OCI-LY7 (cell line): ENCODE measurements at regions of chr17 and their contacts with region 1.

Region 1: GRCh38 chr17:39777534-39778365 is 40.0 kb downstream of the GRB7 start:
- DNase-seq: peak; percentile 63
- H3K4me3 ChIP-seq: peak overlapping the region; percentile 74
- H3K27ac ChIP-seq: peak overlapping the region; percentile 94
- H3K4me1 ChIP-seq: peaks cover 91% of the 10 kb centered on the region
- CTCF ChIP-seq: 0 out of 2 replicates have a peak, but pooled peaks have one; percentile 3

Region 2: DNA sequence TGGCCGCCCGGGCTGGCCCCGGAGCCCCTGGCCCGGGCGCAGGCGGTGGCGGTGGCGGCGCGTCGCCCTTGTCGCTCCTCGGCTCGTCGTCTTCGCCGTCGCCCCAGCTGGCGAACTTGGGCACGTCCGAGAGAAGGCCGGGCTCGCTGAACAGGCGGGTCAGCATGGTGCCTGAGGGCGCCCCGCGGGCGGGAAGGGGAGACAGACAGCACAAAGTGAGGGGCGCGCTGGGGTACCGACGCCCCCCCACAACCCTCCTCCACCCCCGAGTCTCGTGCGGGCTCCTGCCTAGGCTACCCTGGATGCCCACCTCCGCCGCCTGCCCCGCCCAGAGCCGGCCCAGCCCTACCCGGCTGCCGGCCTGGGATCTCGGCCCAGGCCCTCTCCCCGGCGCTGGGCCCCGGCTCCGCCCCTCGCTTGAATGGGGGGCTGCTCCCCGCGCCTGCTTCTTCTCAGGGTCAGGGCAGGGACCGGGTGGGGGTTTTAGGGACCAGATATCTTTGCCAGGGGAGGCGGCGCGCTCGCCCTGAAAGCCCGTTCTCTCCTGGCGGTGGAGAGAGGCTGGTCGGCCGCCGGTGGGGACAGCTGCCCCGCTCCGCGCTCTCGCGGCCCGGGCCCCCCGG is 171.2 kb before region 1 on chr17:
- CTCF ChIA-PET with region 1: no interaction called
- POLR2A ChIA-PET with region 1: no interaction called
- intact Hi-C with region 1: no loop called
- DNase-seq: no peak
- H3K4me3 ChIP-seq: no peak overlapping the region
- H3K27ac ChIP-seq: no peak overlapping the region
- H3K4me1 ChIP-seq: peaks cover 14% of the 10 kb centered on the region
- CTCF ChIP-seq: no peak

Region 3: DNA sequence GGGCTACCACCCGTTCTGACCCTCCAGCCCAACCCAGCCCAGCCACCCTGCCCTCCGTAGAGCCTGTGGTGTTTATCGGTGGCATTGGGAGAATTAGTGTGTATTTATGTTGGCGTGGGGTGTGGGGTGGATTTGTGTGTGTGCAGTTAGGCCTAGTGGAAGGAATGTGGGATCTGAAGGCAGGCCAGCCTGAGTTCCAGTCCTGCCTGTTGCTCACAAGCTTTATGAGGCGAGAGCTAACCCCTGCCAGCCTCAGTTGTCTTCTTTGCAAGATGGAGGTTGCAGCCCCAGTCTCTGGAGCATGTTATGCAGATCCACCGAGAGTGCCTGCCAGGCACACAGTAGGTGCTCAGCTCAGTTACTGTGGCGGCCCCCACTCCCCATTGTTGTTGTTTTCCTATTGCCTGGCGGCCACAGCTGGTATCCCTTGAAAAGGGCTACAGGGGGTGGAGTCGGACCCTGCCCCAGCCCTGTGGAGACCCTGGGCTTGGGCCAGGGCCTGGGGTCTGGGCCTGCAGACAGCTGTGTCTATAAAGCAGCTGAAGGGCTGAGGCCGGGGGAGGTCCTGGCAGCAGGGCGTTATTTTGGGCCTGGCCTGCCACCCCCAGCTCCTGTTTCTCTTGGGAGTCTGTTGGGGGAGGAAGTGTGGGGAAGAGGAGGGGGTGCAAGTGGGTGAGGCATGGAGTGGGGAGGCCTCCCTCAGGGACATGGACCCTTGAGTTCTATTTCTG is 72.8 kb before region 1 on chr17:
- CTCF ChIA-PET with region 1: no interaction called
- POLR2A ChIA-PET with region 1: no interaction called
- intact Hi-C with region 1: no loop called
- DNase-seq: no peak
- H3K4me3 ChIP-seq: no peak overlapping the region
- H3K27ac ChIP-seq: no peak overlapping the region
- H3K4me1 ChIP-seq: peaks cover 4% of the 10 kb centered on the region
- CTCF ChIP-seq: no peak

Region 4: DNA sequence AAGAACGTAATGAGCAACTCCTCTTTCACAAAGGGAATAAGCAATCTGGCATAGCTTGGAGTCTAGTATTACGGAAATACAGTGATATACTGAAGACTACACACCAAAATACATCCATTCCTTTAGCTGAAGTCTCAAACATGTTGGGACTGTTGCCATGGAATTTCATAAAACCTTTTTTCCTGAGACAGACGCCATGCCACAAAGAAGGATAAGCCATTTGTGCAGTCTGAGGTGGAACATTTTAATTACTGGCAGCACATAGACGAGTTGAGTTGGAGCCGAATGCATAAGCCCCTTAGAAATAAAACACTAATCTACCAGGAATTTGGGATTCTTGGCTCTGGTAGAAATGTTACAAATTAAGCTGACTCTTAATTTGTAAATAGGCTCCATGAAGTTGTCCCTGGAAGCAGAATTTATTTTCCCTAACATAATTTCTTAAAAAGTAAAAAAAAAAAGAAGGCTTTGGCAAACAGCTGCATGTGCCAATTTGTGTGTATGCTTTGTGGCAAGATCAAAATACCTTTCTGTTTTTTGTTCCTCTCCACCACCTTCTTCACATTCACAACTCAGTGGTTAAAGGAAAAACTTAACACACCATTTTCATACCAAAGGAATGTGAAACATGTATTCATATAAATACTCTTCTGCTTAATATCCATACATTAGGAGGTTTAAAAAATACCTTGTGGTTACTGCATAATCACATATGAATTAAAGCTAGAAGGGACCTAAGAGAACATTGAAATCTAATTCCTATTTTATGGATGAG is 14.5 kb before region 1 on chr17:
- CTCF ChIA-PET with region 1: no interaction called
- POLR2A ChIA-PET with region 1: interaction called, 24 read pairs
- intact Hi-C with region 1: no loop called
- DNase-seq: no peak
- H3K4me3 ChIP-seq: no peak overlapping the region
- H3K27ac ChIP-seq: no peak overlapping the region
- H3K4me1 ChIP-seq: peaks cover 52% of the 10 kb centered on the region
- CTCF ChIP-seq: no peak

Region 5: GRCh38 chr17:39794249-39794970 is 16.7 kb after region 1 on chr17:
- CTCF ChIA-PET with region 1: interaction called, 5 read pairs
- POLR2A ChIA-PET with region 1: interaction called, 70 read pairs
- intact Hi-C with region 1: loop called (anchors 1 kb)
- DNase-seq: peak; percentile 97
- H3K4me3 ChIP-seq: peak overlapping the region; percentile 54
- H3K27ac ChIP-seq: peak overlapping the region; percentile 99
- H3K4me1 ChIP-seq: peaks cover 96% of the 10 kb centered on the region
- CTCF ChIP-seq: no peak

Region 6: DNA sequence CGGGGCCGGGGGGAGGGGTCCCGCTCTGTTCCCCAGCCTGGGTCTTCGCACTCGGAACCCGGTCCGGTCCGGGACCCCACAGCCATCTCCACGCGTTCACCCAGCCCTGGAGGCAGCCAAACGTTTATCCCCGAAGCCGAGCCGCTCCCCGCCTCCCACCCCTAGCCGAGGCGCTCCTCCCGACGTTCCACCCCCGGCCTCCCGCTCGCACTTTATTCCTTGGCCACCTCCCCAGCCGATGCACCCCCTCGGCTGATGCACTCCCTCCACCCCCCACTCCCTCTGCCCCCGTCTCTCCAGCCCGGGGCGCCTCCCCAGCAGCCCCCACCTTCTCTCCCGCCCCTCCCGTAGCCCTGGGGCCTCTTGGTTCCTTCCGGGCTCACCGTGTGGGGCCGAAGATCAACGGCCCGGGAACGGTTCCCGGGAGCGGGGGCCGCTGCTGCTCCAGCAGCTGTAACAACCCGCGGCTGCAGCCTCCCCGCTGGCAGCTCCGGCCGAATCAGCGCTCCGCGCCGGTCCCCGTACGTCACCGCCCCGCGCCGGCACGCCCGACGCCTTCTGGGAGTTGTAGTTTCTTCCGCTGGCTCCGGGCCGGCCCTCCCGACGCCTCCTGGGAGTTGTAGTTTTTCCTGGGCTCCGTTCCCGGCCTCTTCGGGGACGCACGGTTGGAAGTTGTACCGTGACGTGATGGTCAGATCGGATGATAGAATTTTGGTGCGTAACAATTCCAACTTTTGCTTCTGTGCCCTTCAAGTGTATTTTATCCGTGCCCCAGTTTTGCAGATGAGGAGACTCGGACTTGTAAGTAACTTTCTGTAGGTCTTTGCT is 149.6 kb after region 1 on chr17 and contains the starts of genes LRRC3C and ORMDL3:
- CTCF ChIA-PET with region 1: no interaction called
- POLR2A ChIA-PET with region 1: interaction called, 4 read pairs
- intact Hi-C with region 1: loop called (anchors 5 kb)
- DNase-seq: peak; percentile 93
- H3K4me3 ChIP-seq: peak within 1 kb of the TSS; percentile 91
- H3K27ac ChIP-seq: peak within 1 kb of the TSS; percentile 65
- H3K4me1 ChIP-seq: peaks cover 40% of the 10 kb centered on the region
- CTCF ChIP-seq: no peak
- total RNA-seq, gene LRRC3C: not detected in 2 replicates
- total RNA-seq, gene ORMDL3: 62.2 and 62.6 TPM in 2 replicates

Region 7: GRCh38 chr17:39980351-39981206 is 202.8 kb after region 1 on chr17 and contains the start of gene PSMD3:
- CTCF ChIA-PET with region 1: no interaction called
- POLR2A ChIA-PET with region 1: no interaction called
- intact Hi-C with region 1: no loop called
- DNase-seq: peak; percentile 100
- H3K4me3 ChIP-seq: peak within 1 kb of the TSS; percentile 96
- H3K27ac ChIP-seq: peak within 1 kb of the TSS; percentile 64
- H3K4me1 ChIP-seq: peaks cover 23% of the 10 kb centered on the region
- CTCF ChIP-seq: peak; percentile 79
- total RNA-seq, gene PSMD3: 149 and 150 TPM in 2 replicates